Heart right ventricle (tissue), 16 donors: ENCODE measurements at regions of chr3 and their contacts with region 1.

Region 1: DNA sequence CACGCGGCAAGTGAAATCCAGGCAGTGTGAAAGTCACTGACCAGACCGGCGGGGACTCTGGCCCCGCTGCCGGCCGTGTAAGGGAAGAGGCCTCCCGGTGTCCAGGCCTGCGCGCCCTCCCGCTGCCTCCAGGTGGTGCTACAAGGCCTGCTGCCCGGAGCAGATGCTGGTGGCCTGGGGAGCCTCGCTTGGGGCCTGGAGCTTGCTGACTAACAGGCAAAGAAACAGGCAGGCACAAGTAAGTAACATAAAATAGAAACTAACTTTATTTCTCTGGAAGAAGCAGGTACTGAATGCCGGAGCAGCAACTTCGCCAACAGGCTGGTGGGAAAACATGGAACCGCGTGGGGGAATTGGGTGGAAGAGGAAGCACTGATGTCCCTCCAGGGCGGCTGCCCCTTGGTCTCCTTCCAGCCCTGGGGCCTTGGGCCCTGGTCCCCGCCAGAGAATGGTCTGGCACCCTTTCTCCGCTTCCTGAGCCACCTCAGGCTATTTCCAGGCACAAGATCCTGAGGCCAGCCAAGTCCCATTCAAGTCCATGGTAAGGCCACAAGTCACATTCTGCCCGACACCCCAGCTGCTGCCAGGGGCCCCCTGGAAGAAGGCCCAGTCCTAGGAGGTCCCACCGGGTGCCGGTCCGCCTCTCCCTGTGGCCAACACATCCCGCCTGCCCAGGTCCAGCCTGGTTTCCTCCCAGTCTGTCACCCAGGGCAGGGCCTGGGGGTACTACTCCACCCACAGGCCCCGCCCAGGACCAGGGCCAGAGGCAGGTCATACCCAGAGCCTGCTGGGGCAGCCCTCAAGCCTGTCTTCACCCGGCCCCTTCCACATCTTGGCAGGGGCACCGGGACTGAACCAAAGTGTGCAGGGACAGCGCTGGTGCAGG is 45.0 kb downstream of the TNK2 start:
- DNase-seq: peak; percentile 88 to 91
- ATAC-seq: peak; percentile 93 to 99 (median 97)
- H3K4me3 ChIP-seq: no peak overlapping the region
- H3K27ac ChIP-seq: peak overlapping the region in 9 of 10 donors; percentile 21 to 80 (median 60)
- H3K4me1 ChIP-seq: peaks cover 0 to 31% (median 15%) of the 10 kb centered on the region in 9 donors
- H3K27me3 ChIP-seq: no peaks in the 10 kb centered on the region
- CTCF ChIP-seq: peak; percentile 91 to 99 (median 97)

Region 2: GRCh38 chr3:195542698-195543499 is 320.5 kb before region 1 on chr3 and contains the start of gene PPP1R2:
- intact Hi-C with region 1: no loop called
- DNase-seq: peak; percentile 92 to 94
- ATAC-seq: peak; percentile 89 to 96 (median 94)
- H3K4me3 ChIP-seq: peak within 1 kb of the TSS; percentile 64 to 99 (median 92)
- H3K27ac ChIP-seq: peak within 1 kb of the TSS; percentile 86 to 99 (median 96)
- H3K4me1 ChIP-seq: peaks cover 3 to 80% (median 76%) of the 10 kb centered on the region in 9 donors
- H3K27me3 ChIP-seq: no peaks in the 10 kb centered on the region
- CTCF ChIP-seq: no peak
- total RNA-seq, gene PPP1R2: 37.6 to 55.2 (median 41.0) TPM

Region 3: GRCh38 chr3:195894780-195895607 is 31.6 kb after region 1 on chr3:
- intact Hi-C with region 1: loop called (anchors 1 to 5 kb)
- DNase-seq: peak; percentile 41 to 57
- ATAC-seq: peak; percentile 8 to 40 (median 32)
- H3K4me3 ChIP-seq: peak overlapping the region; percentile 69 to 96 (median 80)
- H3K27ac ChIP-seq: peak overlapping the region; percentile 79 to 95 (median 92)
- H3K4me1 ChIP-seq: peaks cover 30 to 79% (median 59%) of the 10 kb centered on the region in 9 donors
- H3K27me3 ChIP-seq: no peaks in the 10 kb centered on the region
- CTCF ChIP-seq: peak; percentile 88 to 98 (median 92)